ENCODE measurements at regions of chr2 and their contacts with region 1.

Region 1: DNA sequence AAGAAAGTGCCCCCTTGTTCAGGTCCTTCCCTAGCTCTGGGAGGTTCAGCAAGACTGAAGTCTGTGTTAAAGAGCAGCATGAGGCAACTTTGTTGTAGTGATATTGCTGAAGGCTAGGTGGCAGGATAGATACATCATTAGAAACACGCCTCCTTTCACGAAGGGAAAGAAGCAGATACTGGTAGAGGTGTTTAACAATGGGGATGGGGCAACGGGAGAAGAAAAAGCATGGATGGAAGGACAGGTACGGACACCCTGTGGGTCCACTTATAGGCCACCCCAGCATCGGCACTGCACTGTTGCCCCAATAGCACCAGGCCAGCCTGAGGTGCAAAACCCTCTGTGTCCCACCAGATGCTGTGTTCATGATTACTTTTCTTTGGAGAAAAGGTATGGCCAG is 3.5 kb upstream of the IGFBP5 start:
- DNase-seq: no peak
- H3K4me3 ChIP-seq: no peak overlapping the region
- H3K27ac ChIP-seq: peak overlapping the region; percentile 4 to 61 (median 52)
- H3K4me1 ChIP-seq: peaks cover 12 to 58% (median 23%) of the 10 kb centered on the region in 6 donors
- H3K27me3 ChIP-seq: peaks cover 0 to 76% (median 17%) of the 10 kb centered on the region in 7 donors
- CTCF ChIP-seq: peak in 7 of 11 experiments; percentile 32 to 62 (median 53)
- POLR2A ChIP-seq: no peak

Region 2: DNA sequence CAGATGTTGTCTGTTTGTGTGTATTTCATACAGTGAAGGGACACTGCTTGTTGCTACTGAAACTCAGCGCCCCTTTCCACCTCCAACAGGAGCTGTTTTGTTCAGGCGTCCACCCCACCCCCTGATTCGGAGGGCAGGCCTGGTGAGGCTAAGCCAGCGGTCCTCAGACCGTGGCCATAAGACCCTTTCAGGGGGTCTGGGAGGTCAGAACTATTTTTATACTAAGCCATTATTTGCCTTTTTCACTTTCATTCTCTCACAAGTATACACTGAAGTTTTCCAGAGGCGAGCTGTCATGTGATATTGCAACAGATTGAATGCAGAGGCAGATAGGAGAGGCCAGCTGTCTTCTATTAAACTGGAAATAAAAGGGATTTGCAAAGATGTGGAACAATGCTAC is 36.2 kb after region 1 on chr2:
- intact Hi-C with region 1: no loop called
- DNase-seq: no peak
- H3K4me3 ChIP-seq: no peak overlapping the region
- H3K27ac ChIP-seq: peak overlapping the region in 1 of 8 donors; percentile 26
- H3K4me1 ChIP-seq: no peaks in the 10 kb centered on the region
- H3K27me3 ChIP-seq: no peaks in the 10 kb centered on the region
- CTCF ChIP-seq: no peak
- POLR2A ChIP-seq: no peak

Region 3: DNA sequence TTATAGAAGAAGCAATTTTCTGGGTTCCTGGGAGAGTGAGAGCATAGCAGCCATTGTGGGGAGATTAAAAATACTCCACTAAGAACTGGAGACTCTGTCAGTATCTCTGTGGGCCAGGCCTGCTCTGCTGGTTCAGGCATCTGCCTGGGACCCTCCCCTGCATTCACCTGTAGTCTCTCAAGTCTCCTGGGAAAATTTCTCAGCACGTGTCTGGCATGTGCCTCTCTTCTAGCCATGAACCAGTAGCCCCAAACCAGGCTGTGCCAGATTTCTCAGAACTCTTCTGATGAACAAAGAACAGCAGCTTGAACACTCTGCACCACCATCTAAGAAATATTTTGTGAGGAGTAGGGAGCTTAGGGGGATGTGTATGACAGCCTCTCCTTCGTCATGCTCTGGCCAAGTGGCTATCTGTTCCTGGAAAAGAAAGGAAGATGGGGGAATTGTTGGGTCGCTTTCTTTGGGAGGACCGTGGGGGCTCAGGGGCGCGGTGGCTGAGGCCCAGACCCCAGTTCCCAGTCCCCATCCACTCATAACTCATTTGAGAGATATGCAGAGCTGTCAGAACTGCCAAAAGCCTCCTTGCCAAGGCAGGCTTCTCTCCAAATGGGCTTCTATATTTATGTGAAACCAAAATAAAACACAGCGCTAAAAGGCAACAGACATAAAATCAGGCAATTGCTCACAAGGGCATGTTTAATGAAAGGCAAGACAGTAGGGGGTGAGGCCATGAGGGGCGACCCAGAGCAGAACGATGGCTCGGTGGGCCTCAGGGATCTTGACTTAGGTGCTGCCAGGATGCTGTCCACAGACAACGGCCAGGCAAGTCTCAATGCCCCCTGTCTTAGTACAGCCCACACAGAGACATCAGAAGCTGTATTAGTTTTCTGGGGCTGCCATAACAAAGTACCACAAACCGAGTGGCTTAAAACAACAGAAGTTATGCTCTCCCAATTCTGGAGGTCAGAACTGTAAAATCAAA is 275.7 kb after region 1 on chr2:
- intact Hi-C with region 1: no loop called
- DNase-seq: no peak
- H3K4me3 ChIP-seq: no peak overlapping the region
- H3K27ac ChIP-seq: no peak overlapping the region
- H3K4me1 ChIP-seq: no peaks in the 10 kb centered on the region
- H3K27me3 ChIP-seq: no peaks in the 10 kb centered on the region
- CTCF ChIP-seq: no peak
- POLR2A ChIP-seq: no peak

Region 4: GRCh38 chr2:217166241-217166850 is 467.5 kb after region 1 on chr2:
- intact Hi-C with region 1: loop called (anchors 10 kb)
- DNase-seq: no peak
- H3K4me3 ChIP-seq: no peak overlapping the region
- H3K27ac ChIP-seq: no peak overlapping the region
- H3K4me1 ChIP-seq: peaks cover 3 to 6% (median 4%) of the 10 kb centered on the region in 6 donors
- H3K27me3 ChIP-seq: peaks cover 0 to 21% (median 0%) of the 10 kb centered on the region in 7 donors
- CTCF ChIP-seq: peak in 6 of 11 experiments; percentile 15 to 34 (median 24)
- POLR2A ChIP-seq: no peak

Region 5: DNA sequence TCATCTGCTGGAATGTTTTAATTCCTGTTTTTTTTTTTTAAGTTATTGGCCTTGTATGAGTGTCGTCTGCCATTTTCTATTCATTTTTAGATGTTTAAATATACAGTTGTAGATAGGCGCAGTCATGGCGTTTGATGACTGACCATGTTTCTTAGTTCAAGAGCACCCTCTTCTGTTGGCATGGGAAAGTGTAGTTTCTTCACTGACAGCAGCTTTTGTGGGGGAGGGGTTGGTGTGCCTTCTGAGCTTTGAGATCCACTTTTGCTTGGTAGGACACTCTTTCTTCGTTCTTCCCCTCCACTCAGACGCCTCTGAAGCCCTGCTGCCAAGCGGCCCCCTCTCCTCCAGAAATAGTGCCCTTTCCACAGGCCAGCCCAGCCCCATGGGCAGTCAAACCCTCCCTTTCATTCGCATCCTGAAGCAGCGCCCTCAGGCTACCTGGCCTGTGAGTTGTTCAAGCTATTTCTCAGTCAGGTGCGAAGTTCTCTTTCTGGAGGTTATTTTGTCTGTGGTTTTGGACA is 811.9 kb after region 1 on chr2:
- intact Hi-C with region 1: loop called (anchors 5 kb)
- DNase-seq: no peak
- H3K4me3 ChIP-seq: no peak overlapping the region
- H3K27ac ChIP-seq: peak overlapping the region in 2 of 8 donors; percentile 7 to 26
- H3K4me1 ChIP-seq: peaks cover 0 to 31% (median 11%) of the 10 kb centered on the region in 6 donors
- H3K27me3 ChIP-seq: peaks cover 0 to 4% (median 0%) of the 10 kb centered on the region in 7 donors
- CTCF ChIP-seq: peak; percentile 30 to 88 (median 64)
- POLR2A ChIP-seq: no peak

Measured in spleen (tissue), 13 donors.